Naive thymus-derived CD8-positive, alpha-beta T cell (primary cell): ENCODE measurements at regions of chr20 and their contacts with region 1.

Region 1: DNA sequence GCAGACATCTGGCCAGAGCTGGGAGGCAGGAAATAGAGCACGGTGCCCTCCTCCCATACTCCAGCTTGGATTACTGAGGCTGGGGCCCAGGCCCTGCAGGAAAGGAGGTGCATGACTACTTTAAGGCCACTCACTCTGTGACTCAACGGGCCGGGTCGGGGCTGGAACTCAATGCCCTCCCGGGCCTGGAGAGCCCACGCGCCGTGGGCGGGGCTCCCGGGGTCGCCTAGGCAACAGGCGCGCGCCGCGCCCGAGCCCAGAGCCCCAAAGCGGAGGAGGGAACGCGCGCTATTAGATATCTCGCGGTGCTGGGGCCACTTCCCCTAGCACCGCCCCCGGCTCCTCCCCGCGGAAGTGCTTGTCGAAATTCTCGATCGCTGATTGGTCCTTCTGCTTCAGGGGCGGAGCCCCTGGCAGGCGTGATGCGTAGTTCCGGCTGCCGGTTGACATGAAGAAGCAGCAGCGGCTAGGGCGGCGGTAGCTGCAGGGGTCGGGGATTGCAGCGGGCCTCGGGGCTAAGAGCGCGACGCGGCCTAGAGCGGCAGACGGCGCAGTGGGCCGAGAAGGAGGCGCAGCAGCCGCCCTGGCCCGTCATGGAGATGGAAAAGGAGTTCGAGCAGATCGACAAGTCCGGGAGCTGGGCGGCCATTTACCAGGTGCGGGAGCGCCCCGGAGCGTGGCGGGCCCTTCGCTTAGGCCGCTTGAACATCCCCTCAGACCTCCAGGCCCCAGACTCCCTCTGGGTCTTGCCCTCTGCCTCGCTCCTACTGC is at the start of gene PTPN1:
- DNase-seq: peak; percentile 97 to 99 (median 99)
- ATAC-seq: peak; percentile 90 to 95
- H3K4me3 Mint-ChIP-seq: peak within 1 kb of the TSS; percentile 94 to 99 (median 98)
- H3K27ac Mint-ChIP-seq: peak within 1 kb of the TSS; percentile 91 to 100 (median 97)
- H3K4me1 Mint-ChIP-seq: peaks cover 28 to 51% (median 48%) of the 10 kb centered on the region in 4 donors
- H3K27me3 Mint-ChIP-seq: no peaks in the 10 kb centered on the region
- polyA plus RNA-seq, gene PTPN1: 29.1 to 31.9 (median 29.4) TPM

Region 2: DNA sequence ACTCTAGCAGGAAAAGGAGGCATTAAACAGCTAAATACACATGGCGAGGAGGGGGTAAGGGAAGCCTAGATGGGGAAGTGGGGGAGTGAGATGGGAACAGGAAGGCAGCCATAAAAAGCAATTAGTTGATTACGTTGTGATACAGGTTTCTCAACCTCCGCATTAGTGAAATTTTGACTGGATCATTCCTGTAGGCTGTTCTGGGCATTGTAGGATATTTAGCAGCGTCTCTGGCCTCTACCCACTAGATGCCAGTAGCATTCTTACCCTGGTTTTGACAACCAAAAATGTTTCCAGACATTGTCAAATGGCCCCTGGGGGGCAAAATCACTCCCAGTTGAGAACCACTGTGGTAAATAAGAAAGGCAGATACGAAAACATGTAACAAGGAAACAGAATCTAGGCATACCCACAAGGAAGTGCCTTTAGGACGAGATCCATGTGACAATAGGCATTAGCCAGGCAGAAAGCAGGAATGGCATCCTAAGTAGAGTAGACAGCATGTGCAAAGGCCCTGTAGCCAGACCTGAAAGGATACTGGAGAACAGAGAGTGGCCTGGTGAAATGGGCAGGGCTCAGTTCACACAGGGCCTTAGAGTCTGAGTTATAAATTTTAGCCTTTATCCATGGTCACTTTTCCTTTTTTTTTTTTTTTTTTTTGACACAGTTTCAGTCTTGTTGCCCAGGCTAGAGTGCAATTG is 25.7 kb before region 1 on chr20:
- POLR2A ChIA-PET with region 1: interaction called, 15 read pairs
- DNase-seq: no peak
- ATAC-seq: no peak
- H3K4me3 Mint-ChIP-seq: peak overlapping the region; percentile 85 to 99 (median 96)
- H3K27ac Mint-ChIP-seq: peak overlapping the region; percentile 95 to 99 (median 97)
- H3K4me1 Mint-ChIP-seq: peaks cover 18 to 37% (median 27%) of the 10 kb centered on the region in 4 donors
- H3K27me3 Mint-ChIP-seq: no peaks in the 10 kb centered on the region

Region 3: DNA sequence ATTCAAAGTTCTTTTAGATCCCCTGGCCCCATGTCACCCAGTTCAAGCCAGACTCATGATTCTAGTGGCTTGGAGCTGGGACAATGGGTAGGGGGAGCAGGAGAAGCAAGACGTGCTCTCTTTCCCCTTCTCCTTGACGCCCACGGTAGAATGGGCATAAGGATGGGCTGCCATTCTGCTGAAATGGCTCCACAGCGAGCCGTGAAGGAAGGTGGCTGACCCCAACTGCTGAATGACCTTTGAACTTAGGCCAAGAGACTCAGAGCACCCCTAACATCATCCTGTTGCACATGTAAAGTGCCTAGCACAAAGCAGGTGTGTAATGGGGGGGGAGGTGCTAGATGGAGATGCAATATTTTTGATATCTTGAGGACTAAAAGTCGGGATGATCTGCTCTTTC is 15.7 kb before region 1 on chr20:
- POLR2A ChIA-PET with region 1: no interaction called
- DNase-seq: no peak
- ATAC-seq: no peak
- H3K4me3 Mint-ChIP-seq: no peak overlapping the region
- H3K27ac Mint-ChIP-seq: no peak overlapping the region
- H3K4me1 Mint-ChIP-seq: peaks cover 0 to 7% (median under 1%) of the 10 kb centered on the region in 4 donors
- H3K27me3 Mint-ChIP-seq: peaks cover 0 to 1% (median 0%) of the 10 kb centered on the region in 5 donors